GM12878 (cell line): ENCODE measurements at regions of chr2 and their contacts with region 1.

Region 1: DNA sequence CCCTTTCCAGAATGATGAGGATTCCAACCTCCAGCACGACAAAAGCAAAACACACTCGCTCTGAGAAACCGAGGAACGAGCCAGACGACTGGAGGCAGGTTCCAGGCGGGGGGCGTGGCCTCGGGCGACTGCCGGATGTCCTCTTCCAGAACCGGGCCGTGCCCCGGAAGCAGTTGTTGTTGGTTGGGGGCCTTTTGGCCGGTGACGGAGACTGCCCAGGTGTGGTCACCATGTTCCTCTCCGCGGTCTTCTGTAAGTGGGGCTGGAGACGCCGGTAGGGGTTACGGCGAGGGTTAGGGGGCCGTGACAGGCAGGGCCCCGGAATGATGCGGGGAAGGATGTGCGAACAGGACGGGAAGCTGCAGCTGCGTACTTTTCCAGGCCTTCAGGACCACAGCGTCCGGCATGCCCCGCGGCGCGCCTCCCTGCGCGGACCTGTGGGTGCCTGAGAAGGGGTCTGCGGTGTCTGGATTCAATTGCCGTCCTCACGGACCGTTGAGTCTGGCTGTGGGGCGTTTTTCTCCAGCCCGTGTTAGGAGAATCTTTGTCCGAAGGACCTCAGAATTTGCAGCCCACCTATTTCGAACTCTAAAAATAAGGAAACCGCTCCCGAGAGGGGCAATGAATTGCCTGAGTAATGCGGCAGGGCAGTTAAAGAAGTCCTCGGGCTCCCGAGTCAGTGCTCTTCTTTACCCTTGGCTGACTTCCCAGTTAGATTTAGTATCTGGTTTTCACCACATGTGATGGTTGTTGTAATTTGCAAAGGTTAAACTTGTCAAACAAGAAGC is at the start of gene MRPL33:
- DNase-seq: peak; percentile 57
- ATAC-seq: peak; percentile 99
- H3K4me3 ChIP-seq: peak within 1 kb of the TSS; percentile 86
- H3K27ac ChIP-seq: peak within 1 kb of the TSS; percentile 75
- H3K4me1 ChIP-seq: no peaks in the 10 kb centered on the region
- H3K27me3 ChIP-seq: no peaks in the 10 kb centered on the region; a peak in 1 of 4 replicates
- CTCF ChIP-seq: no peak
- EP300 ChIP-seq: no peak
- POLR2A ChIP-seq: peak; percentile 90
- RAD21 ChIP-seq: no peak
- polyA plus RNA-seq, gene MRPL33: 291 to 318 TPM

Region 2: GRCh38 chr2:27738349-27739057 is 33.2 kb before region 1 on chr2:
- CTCF ChIA-PET with region 1: no interaction called
- POLR2A ChIA-PET with region 1: no interaction called
- RAD21 ChIA-PET with region 1: no interaction called
- SMC1A ChIA-PET with region 1: no interaction called
- in situ Hi-C with region 1: no loop called
- intact Hi-C with region 1: no loop called
- DNase-seq: no peak
- ATAC-seq: no peak
- H3K4me3 ChIP-seq: no peak overlapping the region
- H3K27ac ChIP-seq: no peak overlapping the region
- H3K4me1 ChIP-seq: no peaks in the 10 kb centered on the region
- H3K27me3 ChIP-seq: peaks cover 2 to 11% of the 10 kb centered on the region in 2 experiments
- CTCF ChIP-seq: no peak
- EP300 ChIP-seq: no peak
- POLR2A ChIP-seq: no peak
- RAD21 ChIP-seq: no peak

Region 3: GRCh38 chr2:27890146-27890923 is 118.6 kb after region 1 on chr2 and contains the starts of genes BABAM2 and RBKS:
- CTCF ChIA-PET with region 1: no interaction called
- POLR2A ChIA-PET with region 1: no interaction called
- RAD21 ChIA-PET with region 1: no interaction called
- SMC1A ChIA-PET with region 1: interaction called, 3 read pairs
- in situ Hi-C with region 1: no loop called
- intact Hi-C with region 1: loop called (anchors 2 kb)
- DNase-seq: peak; percentile 58
- ATAC-seq: peak; percentile 88
- H3K4me3 ChIP-seq: peak within 1 kb of the TSS; percentile 89
- H3K27ac ChIP-seq: peak within 1 kb of the TSS; percentile 89
- H3K4me1 ChIP-seq: no peaks in the 10 kb centered on the region
- H3K27me3 ChIP-seq: no peaks in the 10 kb centered on the region
- CTCF ChIP-seq: no peak
- EP300 ChIP-seq: no peak
- POLR2A ChIP-seq: peak; percentile 88
- RAD21 ChIP-seq: no peak
- polyA plus RNA-seq, gene BABAM2: 42.7 to 59.9 TPM
- polyA plus RNA-seq, gene RBKS: 0.39 to 0.84 TPM